Endothelial cell of umbilical vein (primary cell): ENCODE measurements at regions of chr1 and their contacts with region 1.

Region 1: DNA sequence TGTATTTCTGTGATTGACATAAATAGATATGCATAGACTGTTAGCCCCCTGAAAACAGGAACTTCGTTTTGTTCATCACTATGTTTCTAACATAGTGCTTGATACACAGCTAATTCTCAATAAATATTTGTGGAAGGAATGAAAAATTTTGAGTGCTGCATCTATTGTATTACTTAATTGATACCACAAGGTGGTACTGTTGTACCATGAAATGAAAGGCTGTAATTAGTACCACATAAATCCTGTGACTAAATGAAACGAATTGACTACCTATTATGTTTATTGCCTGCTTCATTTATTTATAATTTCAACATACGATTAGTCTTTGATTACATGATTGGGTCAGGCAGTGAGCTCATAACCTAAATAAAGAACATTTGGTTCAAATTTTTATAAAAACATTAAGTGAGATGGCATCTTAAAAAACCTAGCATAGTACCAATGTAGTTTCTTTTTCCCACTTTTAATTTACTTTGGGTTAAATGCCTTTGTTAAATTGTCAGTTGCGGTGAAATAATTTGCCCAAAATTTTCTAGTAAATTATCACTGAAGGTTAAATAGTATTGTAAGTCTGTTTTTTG is 15.0 kb upstream of the TGFB2 start:
- DNase-seq: peak; percentile 64
- H3K4me3 ChIP-seq: no peak overlapping the region
- H3K27ac ChIP-seq: no peak overlapping the region
- H3K4me1 ChIP-seq: peaks cover 2% of the 10 kb centered on the region
- H3K27me3 ChIP-seq: no peaks in the 10 kb centered on the region
- CTCF ChIP-seq: peak; percentile 20 to 32
- POLR2A ChIP-seq: no peak

Region 2: DNA sequence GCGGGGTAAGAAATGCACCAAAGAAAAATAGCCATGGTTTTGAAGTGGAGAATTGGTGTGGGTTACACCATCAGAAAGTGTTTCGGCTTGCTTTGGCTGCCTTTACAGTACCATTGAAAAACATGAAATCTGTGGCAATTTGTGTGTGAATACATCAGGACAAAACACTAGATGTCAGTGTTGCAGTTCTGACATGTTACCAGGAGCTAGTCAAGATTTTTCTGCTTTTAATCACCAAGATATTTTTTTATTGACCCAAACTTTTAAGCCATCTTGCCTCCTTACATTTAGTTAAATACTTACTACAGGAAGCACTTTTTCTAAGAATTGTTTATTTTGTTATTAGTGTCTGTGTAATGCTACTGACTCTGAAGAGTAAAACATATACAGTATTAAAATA is 30.7 kb before region 1 on chr1:
- CTCF ChIA-PET with region 1: interaction called, 52 read pairs
- POLR2A ChIA-PET with region 1: no interaction called
- dilution Hi-C with region 1: no loop called
- intact Hi-C with region 1: no loop called
- DNase-seq: peak; percentile 61
- H3K4me3 ChIP-seq: no peak overlapping the region
- H3K27ac ChIP-seq: no peak overlapping the region
- H3K4me1 ChIP-seq: no peaks in the 10 kb centered on the region
- H3K27me3 ChIP-seq: no peaks in the 10 kb centered on the region
- CTCF ChIP-seq: peak; percentile 27 to 39
- POLR2A ChIP-seq: no peak

Region 3: DNA sequence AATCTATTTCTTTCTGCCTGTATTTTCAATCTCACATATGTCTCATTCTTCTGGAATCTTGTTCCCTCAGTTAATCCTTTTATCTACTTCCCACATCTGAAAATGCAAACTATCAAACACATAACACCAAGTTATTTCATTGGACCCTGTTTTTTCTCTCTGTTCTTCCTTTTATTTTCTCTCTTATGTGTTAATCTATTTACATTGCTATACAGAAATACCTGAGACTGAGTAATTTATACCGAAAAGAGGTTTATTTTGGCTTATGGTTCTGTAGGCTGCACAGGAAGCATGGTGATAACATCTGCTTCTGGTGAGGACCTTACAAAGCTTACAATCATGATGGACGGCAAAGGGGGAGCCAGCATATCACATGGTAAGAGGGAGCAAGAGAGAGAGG is 262.6 kb after region 1 on chr1:
- CTCF ChIA-PET with region 1: interaction called, 3 read pairs
- POLR2A ChIA-PET with region 1: no interaction called
- dilution Hi-C with region 1: no loop called
- intact Hi-C with region 1: loop called (anchors 1 kb)
- DNase-seq: peak; percentile 94
- H3K4me3 ChIP-seq: peak overlapping the region in 1 of 3 experiments; percentile 7
- H3K27ac ChIP-seq: peak overlapping the region; percentile 68
- H3K4me1 ChIP-seq: peaks cover 19% of the 10 kb centered on the region
- H3K27me3 ChIP-seq: no peaks in the 10 kb centered on the region
- CTCF ChIP-seq: no peak
- POLR2A ChIP-seq: peak; percentile 42

Region 4: DNA sequence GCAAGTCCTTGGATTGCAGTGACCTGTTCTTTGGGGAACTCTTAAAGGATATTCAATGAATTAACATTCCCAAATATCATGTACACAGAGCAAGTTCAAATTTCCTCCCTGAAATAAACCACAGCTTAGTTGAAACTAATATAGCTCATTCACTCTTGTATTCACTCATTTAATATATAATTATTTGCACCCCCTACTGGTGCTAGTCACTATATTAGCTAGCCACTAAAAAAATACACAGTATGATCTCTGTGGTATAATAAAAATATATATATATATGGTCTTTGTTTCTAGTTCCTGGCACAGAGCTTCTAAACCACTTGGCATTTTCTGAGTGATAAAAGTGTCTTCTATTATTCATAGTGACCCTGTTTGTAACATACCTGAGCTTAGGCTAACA is 666.2 kb after region 1 on chr1:
- CTCF ChIA-PET with region 1: interaction called, 5 read pairs
- POLR2A ChIA-PET with region 1: no interaction called
- dilution Hi-C with region 1: no loop called
- intact Hi-C with region 1: loop called (anchors 5 kb)
- DNase-seq: peak; percentile 26
- H3K4me3 ChIP-seq: no peak overlapping the region
- H3K27ac ChIP-seq: no peak overlapping the region
- H3K4me1 ChIP-seq: no peaks in the 10 kb centered on the region
- H3K27me3 ChIP-seq: no peaks in the 10 kb centered on the region
- CTCF ChIP-seq: peak in 1 of 2 donors; percentile 23
- POLR2A ChIP-seq: no peak

Region 5: DNA sequence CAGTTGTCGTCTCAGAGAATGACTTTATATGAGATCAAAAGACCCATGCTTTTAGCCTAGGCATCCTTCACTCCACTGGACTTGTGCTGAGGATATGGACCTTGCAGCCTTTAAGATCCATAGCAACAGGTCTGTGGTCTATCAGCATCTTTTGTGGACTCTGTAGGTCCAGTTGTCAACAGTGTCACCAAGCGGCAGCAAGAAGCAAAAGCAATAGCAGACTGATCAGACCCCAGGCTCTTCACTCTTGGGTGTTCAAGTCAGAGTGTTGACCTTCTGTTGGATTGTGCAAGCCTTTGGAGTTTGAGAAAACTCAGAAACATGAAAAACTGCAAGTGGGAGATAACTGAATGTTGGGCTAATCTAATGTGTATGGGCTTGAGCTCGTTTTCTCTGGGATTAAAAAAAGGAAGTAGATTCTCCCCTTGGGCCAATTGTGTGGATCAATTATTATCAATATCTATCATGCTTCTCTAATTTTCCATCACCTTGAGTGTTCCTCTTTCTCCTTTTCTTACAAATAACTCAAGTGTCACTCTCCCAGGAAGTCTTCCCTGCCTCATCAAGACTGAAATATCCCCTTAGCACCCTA is 987.7 kb after region 1 on chr1:
- CTCF ChIA-PET with region 1: no interaction called
- POLR2A ChIA-PET with region 1: interaction called, 3 read pairs
- dilution Hi-C with region 1: no loop called
- intact Hi-C with region 1: loop called (anchors 5 kb)
- DNase-seq: peak; percentile 44
- H3K4me3 ChIP-seq: no peak overlapping the region
- H3K27ac ChIP-seq: no peak overlapping the region
- H3K4me1 ChIP-seq: peaks cover 7% of the 10 kb centered on the region
- H3K27me3 ChIP-seq: no peaks in the 10 kb centered on the region
- CTCF ChIP-seq: peak in 1 of 2 donors; percentile 18
- POLR2A ChIP-seq: no peak

Region 6: GRCh38 chr1:219416594-219417238 is 1086.6 kb after region 1 on chr1:
- CTCF ChIA-PET with region 1: interaction called, 11 read pairs
- POLR2A ChIA-PET with region 1: no interaction called
- dilution Hi-C with region 1: no loop called
- intact Hi-C with region 1: loop called (anchors 1 kb)
- DNase-seq: peak; percentile 71
- H3K4me3 ChIP-seq: no peak overlapping the region
- H3K27ac ChIP-seq: no peak overlapping the region
- H3K4me1 ChIP-seq: no peaks in the 10 kb centered on the region
- H3K27me3 ChIP-seq: no peaks in the 10 kb centered on the region
- CTCF ChIP-seq: peak; percentile 62 to 75
- POLR2A ChIP-seq: no peak

Region 7: GRCh38 chr1:219660666-219661463 is 1330.7 kb after region 1 on chr1:
- CTCF ChIA-PET with region 1: interaction called, 34 read pairs
- POLR2A ChIA-PET with region 1: no interaction called
- dilution Hi-C with region 1: no loop called
- intact Hi-C with region 1: loop called (anchors 1 kb)
- DNase-seq: peak; percentile 84
- H3K4me3 ChIP-seq: peak overlapping the region in 2 of 3 experiments; percentile 24 to 49
- H3K27ac ChIP-seq: no peak overlapping the region
- H3K4me1 ChIP-seq: peaks cover 2% of the 10 kb centered on the region
- H3K27me3 ChIP-seq: peaks cover 0 to 9% of the 10 kb centered on the region in 2 experiments
- CTCF ChIP-seq: peak; percentile 82 to 86
- POLR2A ChIP-seq: no peak